ENCODE measurements at regions of chrX and their contacts with region 1.

Region 1: DNA sequence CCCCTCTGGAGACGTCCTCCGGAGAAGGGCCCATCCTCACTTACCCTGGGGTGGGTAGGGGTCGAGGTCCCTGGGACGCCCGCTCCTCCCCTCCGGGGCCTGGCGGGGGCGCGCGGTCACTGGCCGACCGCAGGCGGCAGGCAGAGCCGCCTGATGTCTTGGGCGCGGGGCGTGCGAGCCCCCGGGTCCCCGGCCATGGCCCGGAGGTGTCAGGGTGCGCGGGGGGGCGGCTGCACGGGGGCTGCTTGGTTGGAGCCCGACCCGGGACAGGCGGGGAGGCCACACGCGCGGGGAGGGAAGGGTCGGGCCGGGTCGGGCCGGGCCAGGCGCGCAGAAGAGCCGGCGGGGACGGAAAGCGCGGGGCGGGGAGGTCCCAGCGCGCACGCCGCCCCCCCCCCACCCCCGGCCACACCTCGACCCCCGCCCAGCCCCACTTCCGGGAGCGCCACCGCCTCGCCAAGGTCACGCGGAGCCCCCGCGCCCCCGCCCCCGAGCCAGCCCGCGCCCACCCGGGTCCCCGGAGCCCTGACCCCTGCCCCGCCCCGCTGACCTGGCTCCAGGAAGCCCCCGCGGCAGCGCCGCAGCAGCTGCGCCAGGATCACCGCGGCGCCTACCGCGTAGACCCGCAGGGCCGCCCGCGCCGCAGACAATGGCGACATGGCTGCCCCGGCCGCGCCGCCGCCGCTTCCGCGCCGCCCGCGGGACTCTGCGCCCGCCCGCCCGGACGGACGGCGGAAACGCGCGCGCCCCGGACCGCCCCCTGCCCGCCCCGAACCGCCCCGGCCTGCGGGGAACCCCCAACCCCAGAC is at the starts of genes DHRSX and ZBED1:
- DNase-seq: peak; percentile 48
- H3K4me3 ChIP-seq: peak within 1 kb of the TSS; percentile 99
- H3K27ac ChIP-seq: peak within 1 kb of the TSS; percentile 93
- H3K4me1 ChIP-seq: peaks cover 28% of the 10 kb centered on the region
- H3K27me3 ChIP-seq: no peaks in the 10 kb centered on the region
- CTCF ChIP-seq: no peak
- total RNA-seq, gene DHRSX: 28.1 and 30.2 TPM in 2 replicates
- total RNA-seq, gene ZBED1: 37.6 and 46.5 TPM in 2 replicates

Region 2: GRCh38 chrX:2145692-2146367 is 354.6 kb before region 1 on chrX:
- CTCF ChIA-PET with region 1: no interaction called
- POLR2A ChIA-PET with region 1: no interaction called
- intact Hi-C with region 1: no loop called
- DNase-seq: peak; percentile 46
- H3K4me3 ChIP-seq: no peak overlapping the region
- H3K27ac ChIP-seq: no peak overlapping the region
- H3K4me1 ChIP-seq: no peaks in the 10 kb centered on the region
- H3K27me3 ChIP-seq: no peaks in the 10 kb centered on the region
- CTCF ChIP-seq: no peak

Region 3: DNA sequence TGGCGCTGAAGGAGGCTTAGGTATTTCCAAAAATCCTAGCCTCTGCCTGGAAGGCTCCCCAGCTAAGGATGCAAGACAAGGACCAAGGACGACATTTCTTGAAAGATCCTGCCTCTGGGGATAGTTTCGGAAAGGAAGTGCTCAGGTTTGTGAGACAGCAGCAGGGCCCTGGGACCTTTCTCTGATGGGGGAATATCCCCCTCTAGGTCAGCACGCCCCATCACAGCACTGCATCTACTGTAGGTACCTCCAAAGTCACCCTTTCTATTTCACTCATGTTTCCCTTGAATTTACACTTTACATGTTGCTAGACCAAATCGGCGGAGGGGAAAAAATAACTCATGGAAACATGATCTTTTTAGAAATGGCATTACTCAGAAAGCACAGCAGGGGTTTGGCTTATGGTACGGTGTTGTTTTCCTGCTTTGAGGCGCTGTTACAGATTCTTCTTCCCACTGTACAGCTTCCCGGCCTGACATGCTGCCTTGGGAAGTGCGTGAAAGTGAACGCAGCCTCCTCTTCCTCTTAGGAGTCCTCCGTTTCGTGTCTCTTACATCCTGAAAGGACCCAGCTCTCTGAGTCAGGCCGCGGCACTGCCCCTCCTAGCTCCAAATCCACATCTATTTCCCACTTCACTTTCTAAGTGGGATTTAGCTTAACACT is 77.5 kb after region 1 on chrX:
- CTCF ChIA-PET with region 1: no interaction called
- POLR2A ChIA-PET with region 1: no interaction called
- intact Hi-C with region 1: loop called (anchors 10 kb)
- DNase-seq: peak; percentile 56
- H3K4me3 ChIP-seq: no peak overlapping the region
- H3K27ac ChIP-seq: no peak overlapping the region
- H3K4me1 ChIP-seq: peaks cover 17% of the 10 kb centered on the region
- H3K27me3 ChIP-seq: peaks cover 20% of the 10 kb centered on the region
- CTCF ChIP-seq: no peak